Transverse colon (tissue), 4 donors: ENCODE measurements at regions of chr9 and their contacts with region 1.

Region 1: DNA sequence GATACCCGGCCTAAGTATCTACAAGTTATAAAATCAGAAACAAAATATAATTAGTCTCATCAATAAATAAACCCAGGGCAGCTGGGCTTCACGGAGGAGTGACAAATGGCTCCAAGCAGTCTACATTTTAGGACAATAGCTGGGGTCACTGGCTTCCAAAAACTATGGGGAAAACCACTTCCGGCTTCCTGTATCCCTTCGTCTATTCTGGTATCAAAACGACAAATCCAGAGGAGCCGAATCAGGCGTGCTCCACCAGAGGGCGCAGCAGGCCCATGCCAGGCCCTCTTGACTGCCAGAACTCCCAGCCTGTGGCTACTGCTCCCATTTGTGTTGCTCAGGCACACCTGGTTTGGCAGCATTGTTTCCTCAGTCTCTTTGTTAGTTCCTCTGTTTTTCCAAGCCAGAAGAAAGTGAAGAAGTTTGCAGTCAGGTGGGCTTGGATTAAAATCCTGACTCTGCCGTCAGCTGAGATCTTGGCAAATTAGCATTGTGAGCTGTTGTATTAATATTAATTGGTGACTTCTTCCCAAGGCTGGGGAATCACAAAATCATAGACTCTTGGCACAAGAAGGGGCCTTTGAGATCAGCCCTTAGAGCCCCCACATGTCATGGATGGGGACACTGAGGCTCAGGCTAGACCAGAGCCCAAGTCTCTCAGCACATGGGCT is 11.6 kb upstream of the RAB14 start:
- DNase-seq: peak; percentile 92
- H3K4me3 ChIP-seq: no peak overlapping the region
- H3K27ac ChIP-seq: peak overlapping the region in 3 of 4 donors; percentile 51 to 70 (median 62)
- H3K4me1 ChIP-seq: peaks cover 0 to 9% (median 6%) of the 10 kb centered on the region in 4 donors
- H3K27me3 ChIP-seq: no peaks in the 10 kb centered on the region
- CTCF ChIP-seq: peak; percentile 92 to 97 (median 94)
- EP300 ChIP-seq: no peak
- POLR2A ChIP-seq: no peak

Region 2: DNA sequence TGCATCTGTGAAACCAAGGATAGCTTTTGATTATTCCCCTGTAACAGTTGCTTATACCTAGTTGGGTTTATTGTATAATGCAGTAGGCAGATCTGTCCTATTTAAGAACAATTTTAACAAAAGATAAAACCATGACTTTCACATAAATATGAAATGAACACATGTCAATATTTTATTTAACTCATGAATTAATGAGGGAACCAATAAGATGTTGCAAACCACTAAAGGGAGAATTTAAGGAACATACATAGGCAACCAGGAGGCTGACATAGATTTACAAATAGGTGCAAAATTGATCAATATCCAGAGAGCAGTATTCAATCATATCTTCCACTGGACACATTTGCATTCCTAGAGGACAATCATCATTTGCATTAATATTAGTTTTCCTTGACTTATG is 1564.1 kb before region 1 on chr9:
- in situ Hi-C with region 1: no loop called
- intact Hi-C with region 1: no loop called
- DNase-seq: no peak
- H3K4me3 ChIP-seq: no peak overlapping the region
- H3K27ac ChIP-seq: no peak overlapping the region
- H3K4me1 ChIP-seq: no peaks in the 10 kb centered on the region
- H3K27me3 ChIP-seq: no peaks in the 10 kb centered on the region
- CTCF ChIP-seq: no peak
- EP300 ChIP-seq: no peak
- POLR2A ChIP-seq: no peak

Region 3: GRCh38 chr9:121299467-121300234 is 86.4 kb after region 1 on chr9:
- in situ Hi-C with region 1: loop called in 3 of 4 experiments (anchors 10 to 25 kb)
- intact Hi-C with region 1: no loop called
- DNase-seq: peak; percentile 70
- H3K4me3 ChIP-seq: peak overlapping the region; percentile 16 to 60 (median 54)
- H3K27ac ChIP-seq: peak overlapping the region; percentile 79 to 95 (median 88)
- H3K4me1 ChIP-seq: peaks cover 59 to 89% (median 72%) of the 10 kb centered on the region in 4 donors
- H3K27me3 ChIP-seq: no peaks in the 10 kb centered on the region
- CTCF ChIP-seq: no peak
- EP300 ChIP-seq: no peak
- POLR2A ChIP-seq: peak; percentile 41

Region 4: DNA sequence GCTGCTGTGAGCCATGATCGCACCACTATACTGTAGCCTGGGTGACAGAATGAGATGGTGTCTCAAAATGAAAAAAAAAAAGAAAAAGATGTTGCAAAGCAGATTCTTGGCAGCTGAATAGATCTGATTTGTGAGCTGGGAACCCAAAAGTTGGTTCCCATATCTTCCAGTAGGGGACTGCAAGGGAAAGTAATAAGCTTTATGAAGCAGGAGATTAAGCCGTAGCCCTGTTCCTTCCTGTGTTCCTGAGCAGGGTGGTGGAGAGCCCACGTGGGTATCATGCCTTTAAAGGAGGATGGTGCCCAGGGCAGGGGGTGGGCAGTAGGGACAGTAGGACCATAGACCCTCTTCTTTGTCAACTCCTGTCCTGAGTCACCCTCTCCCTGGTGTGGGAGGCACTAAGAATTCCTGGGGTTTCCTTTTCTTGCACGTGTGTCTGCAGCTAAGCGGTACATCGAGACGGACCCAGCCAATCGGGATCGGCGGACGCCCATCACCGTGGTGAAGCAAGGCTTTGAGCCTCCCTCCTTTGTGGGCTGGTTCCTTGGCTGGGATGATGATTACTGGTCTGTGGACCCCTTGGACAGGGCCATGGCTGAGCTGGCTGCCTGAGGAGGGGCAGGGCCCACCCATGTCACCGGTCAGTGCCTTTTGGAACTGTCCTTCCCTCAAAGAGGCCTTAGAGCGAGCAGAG is 118.9 kb after region 1 on chr9:
- in situ Hi-C with region 1: no loop called
- intact Hi-C with region 1: no loop called
- DNase-seq: no peak
- H3K4me3 ChIP-seq: no peak overlapping the region
- H3K27ac ChIP-seq: peak overlapping the region; percentile 77 to 87 (median 84)
- H3K4me1 ChIP-seq: peaks cover 0 to 1% (median 0%) of the 10 kb centered on the region in 4 donors
- H3K27me3 ChIP-seq: no peaks in the 10 kb centered on the region
- CTCF ChIP-seq: peak in 4 of 5 experiments; percentile 28 to 45 (median 36)
- EP300 ChIP-seq: no peak
- POLR2A ChIP-seq: no peak

Region 5: GRCh38 chr9:121376214-121376830 is 163.1 kb after region 1 on chr9:
- in situ Hi-C with region 1: no loop called
- intact Hi-C with region 1: loop called (anchors 5 kb)
- DNase-seq: no peak
- H3K4me3 ChIP-seq: no peak overlapping the region
- H3K27ac ChIP-seq: no peak overlapping the region
- H3K4me1 ChIP-seq: peaks cover 21 to 28% (median 21%) of the 10 kb centered on the region in 4 donors
- H3K27me3 ChIP-seq: no peaks in the 10 kb centered on the region
- CTCF ChIP-seq: peak in 4 of 5 experiments; percentile 39 to 50 (median 44)
- EP300 ChIP-seq: no peak
- POLR2A ChIP-seq: no peak

Region 6: GRCh38 chr9:121399883-121400607 is 186.8 kb after region 1 on chr9:
- in situ Hi-C with region 1: loop called (anchors 5 to 10 kb)
- intact Hi-C with region 1: loop called (anchors 5 kb)
- DNase-seq: no peak
- H3K4me3 ChIP-seq: no peak overlapping the region
- H3K27ac ChIP-seq: no peak overlapping the region
- H3K4me1 ChIP-seq: no peaks in the 10 kb centered on the region
- H3K27me3 ChIP-seq: no peaks in the 10 kb centered on the region
- CTCF ChIP-seq: peak; percentile 72 to 82 (median 76)
- EP300 ChIP-seq: no peak
- POLR2A ChIP-seq: no peak

Region 7: DNA sequence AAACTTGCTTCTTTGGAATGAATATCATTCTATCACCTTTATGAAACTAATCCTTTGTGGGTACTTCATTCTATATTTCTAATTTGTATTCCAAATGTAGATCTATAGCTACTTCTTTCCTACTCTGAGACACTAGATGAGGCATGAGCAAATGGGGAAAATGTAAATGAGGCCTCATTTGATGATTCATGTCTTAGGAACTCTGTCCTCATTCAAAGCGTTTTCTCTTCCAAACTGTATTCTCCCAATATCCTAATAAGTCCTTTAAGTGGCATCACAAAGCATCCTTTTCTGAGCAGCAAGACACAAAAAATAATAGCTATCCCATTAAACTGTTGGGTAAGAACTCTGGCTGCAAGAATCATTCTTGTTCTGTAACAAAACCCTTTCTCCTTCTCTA is 823.7 kb after region 1 on chr9:
- in situ Hi-C with region 1: no loop called
- intact Hi-C with region 1: no loop called
- DNase-seq: no peak
- H3K4me3 ChIP-seq: no peak overlapping the region
- H3K27ac ChIP-seq: no peak overlapping the region
- H3K4me1 ChIP-seq: peaks cover 0 to 6% (median 0%) of the 10 kb centered on the region in 4 donors
- H3K27me3 ChIP-seq: no peaks in the 10 kb centered on the region
- CTCF ChIP-seq: no peak
- EP300 ChIP-seq: no peak
- POLR2A ChIP-seq: no peak